Aorta (tissue), 5 donors: ENCODE measurements at regions of chr5 and their contacts with region 1.

Region 1: DNA sequence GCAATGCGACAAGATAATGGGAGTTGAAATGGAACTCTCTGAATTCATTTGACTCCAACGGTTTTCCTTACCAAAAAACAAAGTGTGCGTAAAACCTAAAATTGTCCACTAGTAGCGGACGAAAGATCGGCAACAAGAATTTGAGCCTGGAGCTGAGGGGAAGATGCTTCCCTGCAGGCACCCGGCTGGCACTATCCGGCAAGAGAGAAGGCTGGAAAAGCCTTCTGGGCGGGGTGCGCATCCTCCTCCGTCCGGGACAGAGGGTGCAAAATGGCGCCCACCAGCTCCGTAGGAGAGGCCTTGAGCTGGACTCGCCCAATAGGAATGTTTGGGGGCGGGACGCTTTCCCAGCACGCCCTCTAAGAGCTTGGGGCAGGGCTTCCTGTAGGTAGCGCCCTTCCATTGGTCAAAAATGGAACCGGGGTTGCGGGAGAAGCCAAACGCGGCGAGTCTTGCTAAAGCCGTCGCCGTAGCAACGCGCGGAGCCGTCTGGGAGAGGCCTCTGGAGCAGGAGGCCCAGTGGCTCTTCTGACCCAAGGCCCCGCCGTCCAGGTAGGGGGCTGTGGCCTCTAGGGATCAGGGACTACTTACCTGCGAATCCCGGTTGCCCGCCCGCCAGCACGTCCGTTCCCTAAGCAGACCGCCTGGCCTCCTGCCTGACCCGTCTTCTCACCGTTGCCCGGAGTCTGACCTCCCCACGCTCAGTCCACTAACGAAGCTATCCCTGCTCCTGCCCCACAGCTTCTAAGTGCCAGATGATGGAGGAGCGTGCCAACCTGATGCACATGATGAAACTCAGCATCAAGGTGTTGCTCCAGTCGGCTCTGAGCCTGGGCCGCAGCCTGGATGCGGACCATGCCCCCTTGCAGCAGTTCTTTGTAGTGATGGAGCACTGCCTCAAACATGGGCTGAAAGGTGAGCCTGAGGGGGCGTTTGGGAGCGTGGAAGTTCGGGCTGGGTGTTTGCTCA is 9.2 kb downstream of the RUFY1 start:
- DNase-seq: peak; percentile 98
- ATAC-seq: peak; percentile 100
- H3K4me3 ChIP-seq: peak overlapping the region; percentile 64 to 73
- H3K27ac ChIP-seq: peak overlapping the region in 1 of 2 donors; percentile 58
- H3K4me1 ChIP-seq: no peaks in the 10 kb centered on the region
- H3K27me3 ChIP-seq: no peaks in the 10 kb centered on the region

Region 2: DNA sequence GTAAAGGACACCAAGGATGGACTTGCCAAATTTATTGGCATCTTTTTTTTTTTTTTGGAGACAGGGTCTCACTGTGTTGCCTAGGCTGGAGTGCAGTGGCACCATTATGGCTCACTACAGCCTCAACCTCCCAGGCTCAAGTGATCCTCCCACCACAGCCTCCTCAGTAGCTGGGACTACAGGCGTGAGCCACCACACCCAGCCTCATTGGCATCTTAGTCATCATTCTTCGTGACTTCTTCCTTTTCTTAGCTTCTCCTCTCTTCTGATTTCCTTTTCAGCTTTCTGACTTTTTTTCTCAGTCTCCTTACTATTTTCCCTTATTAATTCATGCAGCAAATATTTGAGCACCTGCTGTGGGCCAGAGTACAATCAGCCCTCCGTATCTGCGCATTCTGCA is 179.2 kb after region 1 on chr5:
- intact Hi-C with region 1: no loop called
- DNase-seq: no peak
- ATAC-seq: no peak
- H3K4me3 ChIP-seq: no peak overlapping the region
- H3K27ac ChIP-seq: no peak overlapping the region
- H3K4me1 ChIP-seq: no peaks in the 10 kb centered on the region
- H3K27me3 ChIP-seq: no peaks in the 10 kb centered on the region

Region 3: DNA sequence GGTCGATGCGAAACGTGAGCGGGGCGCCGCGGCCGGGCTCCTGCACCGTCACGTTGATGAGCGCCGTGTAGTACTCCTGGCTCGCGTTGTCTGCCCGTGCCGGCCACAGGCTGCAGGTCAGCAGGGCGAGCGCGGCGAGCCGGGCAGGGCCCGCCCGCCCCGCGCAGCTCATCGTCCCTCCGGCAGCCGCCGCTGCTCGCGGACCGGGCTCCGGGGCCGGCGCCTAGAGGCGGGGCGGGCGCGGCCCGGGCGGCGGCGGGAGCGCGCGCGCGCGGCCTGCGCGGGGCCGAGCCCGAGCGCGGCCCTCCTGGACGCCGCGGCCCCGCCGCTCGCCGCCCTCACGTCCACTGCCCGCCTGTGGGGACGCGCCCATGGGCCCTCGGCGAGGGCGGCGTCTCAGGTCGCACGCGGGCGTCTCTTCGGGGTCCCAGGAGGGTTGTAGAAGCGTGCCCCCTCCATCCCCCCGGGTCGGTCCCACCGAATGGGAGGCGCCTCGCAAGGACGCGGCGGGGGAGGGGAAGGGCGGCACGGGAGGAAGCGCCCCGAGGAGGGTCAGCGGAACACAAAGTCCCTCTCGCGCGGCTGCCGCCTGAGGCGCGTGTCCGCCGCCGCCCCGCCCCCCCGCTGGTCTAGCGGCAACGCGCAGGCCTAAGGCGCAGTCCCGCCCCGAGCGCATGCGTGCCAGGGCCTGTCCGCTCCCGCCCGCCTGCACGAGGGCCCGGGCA is 512.1 kb after region 1 on chr5 and contains the start of gene RNF130:
- intact Hi-C with region 1: loop called in 1 of 2 experiments (anchors 10 kb)
- DNase-seq: peak; percentile 97 to 98
- ATAC-seq: peak; percentile 98
- H3K4me3 ChIP-seq: peak within 1 kb of the TSS; percentile 77 to 91
- H3K27ac ChIP-seq: peak within 1 kb of the TSS; percentile 31 to 83
- H3K4me1 ChIP-seq: no peaks in the 10 kb centered on the region
- H3K27me3 ChIP-seq: no peaks in the 10 kb centered on the region
- total RNA-seq, gene RNF130: 71.7 to 95.8 TPM